Mammary epithelial cell (primary cell): ENCODE measurements at regions of chr11 and their contacts with region 1.

Region 1: GRCh38 chr11:32448232-32448631 is 12.9 kb upstream of the WT1 start:
- DNase-seq: no peak
- H3K4me3 ChIP-seq: no peak overlapping the region
- H3K27ac ChIP-seq: no peak overlapping the region
- H3K4me1 ChIP-seq: no peaks in the 10 kb centered on the region
- H3K27me3 ChIP-seq: peaks cover 3% of the 10 kb centered on the region
- CTCF ChIP-seq: peak in 1 of 2 donors; percentile 4

Region 2: GRCh38 chr11:32172848-32173834 is 275.1 kb before region 1 on chr11:
- CTCF ChIA-PET with region 1: no interaction called
- dilution Hi-C with region 1: no loop called
- in situ Hi-C with region 1: no loop called
- intact Hi-C with region 1: no loop called
- DNase-seq: peak; percentile 32
- H3K4me3 ChIP-seq: peak overlapping the region in 1 of 3 experiments; percentile 15
- H3K27ac ChIP-seq: no peak overlapping the region
- H3K4me1 ChIP-seq: peaks cover 4% of the 10 kb centered on the region
- H3K27me3 ChIP-seq: no peaks in the 10 kb centered on the region
- CTCF ChIP-seq: peak; percentile 57 to 84

Region 3: DNA sequence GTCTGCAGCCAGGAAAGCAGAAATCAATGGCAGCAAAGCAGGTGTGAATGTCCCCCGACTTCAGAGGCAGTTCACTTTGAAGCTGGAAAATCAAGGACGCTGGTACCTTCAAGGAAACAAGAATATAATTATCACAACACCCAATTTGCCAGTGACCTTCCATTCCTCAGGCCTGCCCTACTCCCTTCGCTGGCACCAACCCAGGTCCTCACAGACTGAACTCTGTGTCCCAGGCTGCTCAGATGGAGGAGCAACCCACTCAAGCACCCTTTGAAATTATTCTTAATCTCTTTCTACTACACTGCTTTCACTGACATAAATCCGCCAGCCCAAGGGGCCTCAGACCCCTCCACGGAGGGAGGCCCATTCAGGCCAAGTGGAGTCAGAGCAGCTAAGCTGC is 51.8 kb after region 1 on chr11:
- CTCF ChIA-PET with region 1: interaction called, 23 read pairs
- dilution Hi-C with region 1: no loop called
- in situ Hi-C with region 1: no loop called
- intact Hi-C with region 1: no loop called
- DNase-seq: no peak
- H3K4me3 ChIP-seq: no peak overlapping the region
- H3K27ac ChIP-seq: no peak overlapping the region
- H3K4me1 ChIP-seq: no peaks in the 10 kb centered on the region
- H3K27me3 ChIP-seq: no peaks in the 10 kb centered on the region
- CTCF ChIP-seq: no peak